Activated CD4-positive, alpha-beta memory T cell treated with anti-CD3 and anti-CD28 coated beads for 36 hours (primary cell): ENCODE measurements at regions of chr9 and their contacts with region 1.

Region 1: GRCh38 chr9:70419546-70420266 is 5.2 kb upstream of the KLF9 start:
- DNase-seq: peak; percentile 94
- H3K4me3 Mint-ChIP-seq: peak overlapping the region; percentile 92
- H3K27ac Mint-ChIP-seq: peak overlapping the region; percentile 99
- H3K4me1 Mint-ChIP-seq: peaks cover 39% of the 10 kb centered on the region
- H3K27me3 Mint-ChIP-seq: no peaks in the 10 kb centered on the region

Region 2: GRCh38 chr9:70406434-70406862 is 13.3 kb before region 1 on chr9:
- CTCF ChIA-PET with region 1: interaction called, 9 read pairs
- POLR2A ChIA-PET with region 1: interaction called, 47 read pairs
- intact Hi-C with region 1: loop called (anchors 1 kb)
- DNase-seq: peak; percentile 69
- H3K4me3 Mint-ChIP-seq: peak overlapping the region; percentile 73
- H3K27ac Mint-ChIP-seq: peak overlapping the region; percentile 92
- H3K4me1 Mint-ChIP-seq: peaks cover 79% of the 10 kb centered on the region
- H3K27me3 Mint-ChIP-seq: no peaks in the 10 kb centered on the region

Region 3: GRCh38 chr9:70484210-70485130 is 64.8 kb after region 1 on chr9:
- CTCF ChIA-PET with region 1: interaction called, 7 read pairs
- POLR2A ChIA-PET with region 1: no interaction called
- intact Hi-C with region 1: loop called (anchors 1 kb)
- DNase-seq: peak; percentile 21
- H3K4me3 Mint-ChIP-seq: no peak overlapping the region
- H3K27ac Mint-ChIP-seq: no peak overlapping the region
- H3K4me1 Mint-ChIP-seq: peaks cover 7% of the 10 kb centered on the region
- H3K27me3 Mint-ChIP-seq: no peaks in the 10 kb centered on the region

Region 4: DNA sequence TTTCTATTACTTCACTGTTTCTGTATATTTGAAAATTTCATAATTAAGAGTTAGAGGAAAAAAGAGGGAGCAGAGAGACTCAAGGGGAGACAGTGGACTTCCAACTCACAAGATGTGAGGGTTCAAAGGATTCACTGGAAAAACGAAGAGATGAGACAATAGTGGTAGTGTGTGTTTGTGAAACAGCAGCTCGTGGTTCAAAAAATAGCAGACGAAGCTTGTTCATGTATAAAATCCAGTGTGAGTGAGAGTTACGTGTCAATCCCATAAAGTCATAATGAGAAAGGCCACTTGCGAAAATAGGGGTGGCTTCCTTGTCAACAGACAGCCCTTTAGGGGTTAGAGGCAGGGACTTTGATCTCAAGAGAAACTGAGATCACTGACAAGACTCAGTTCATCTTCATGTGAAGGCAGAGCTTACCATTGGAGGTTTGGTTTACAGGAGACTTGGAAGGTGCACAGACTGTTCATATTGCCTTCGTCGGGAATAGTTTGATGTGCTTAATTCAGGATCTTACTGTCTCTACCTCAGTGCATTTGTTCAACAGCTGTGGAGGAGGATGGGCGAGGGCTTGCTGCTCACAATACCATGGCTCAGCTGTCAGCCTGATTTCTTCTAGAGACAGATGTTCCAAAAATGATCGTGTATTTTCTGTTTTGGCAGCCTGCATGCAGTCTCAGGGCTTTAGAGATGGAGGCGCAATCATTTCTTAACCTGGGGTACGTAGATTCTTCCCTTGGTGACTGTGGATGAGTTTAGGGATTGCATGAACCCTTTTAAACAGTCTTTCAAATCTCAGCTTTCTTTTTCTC is 100.4 kb after region 1 on chr9:
- CTCF ChIA-PET with region 1: interaction called, 3 read pairs
- POLR2A ChIA-PET with region 1: interaction called, 5 read pairs
- intact Hi-C with region 1: loop called (anchors 1 kb)
- DNase-seq: peak; percentile 31
- H3K4me3 Mint-ChIP-seq: peak overlapping the region; percentile 58
- H3K27ac Mint-ChIP-seq: peak overlapping the region; percentile 88
- H3K4me1 Mint-ChIP-seq: peaks cover 30% of the 10 kb centered on the region
- H3K27me3 Mint-ChIP-seq: peaks cover 1% of the 10 kb centered on the region